Adrenal gland (tissue), 19 donors: ENCODE measurements at regions of chr19 and their contacts with region 1.

Region 1: GRCh38 chr19:3108775-3109174 is 14.6 kb downstream of the GNA11 start:
- DNase-seq: peak; percentile 56 to 81 (median 72)
- H3K4me3 ChIP-seq: no peak overlapping the region
- H3K27ac ChIP-seq: no peak overlapping the region
- H3K4me1 ChIP-seq: peaks cover 6 to 23% of the 10 kb centered on the region in 2 donors
- H3K27me3 ChIP-seq: no peaks in the 10 kb centered on the region
- CTCF ChIP-seq: peak; percentile 68 to 82 (median 76)
- POLR2A ChIP-seq: no peak

Region 2: GRCh38 chr19:2950286-2951124 is 158.3 kb before region 1 on chr19:
- intact Hi-C with region 1: loop called in 1 of 2 experiments (anchors 10 kb)
- DNase-seq: peak; percentile 100
- H3K4me3 ChIP-seq: peak overlapping the region; percentile 52 to 93 (median 81)
- H3K27ac ChIP-seq: peak overlapping the region; percentile 90 to 97 (median 96)
- H3K4me1 ChIP-seq: peaks cover 12 to 13% of the 10 kb centered on the region in 2 donors
- H3K27me3 ChIP-seq: no peaks in the 10 kb centered on the region
- CTCF ChIP-seq: no peak
- POLR2A ChIP-seq: peak; percentile 80 to 91

Region 3: GRCh38 chr19:2962045-2962561 is 146.7 kb before region 1 on chr19:
- intact Hi-C with region 1: loop called (anchors 10 kb)
- DNase-seq: peak in 4 of 7 donors; percentile 57 to 79 (median 76)
- H3K4me3 ChIP-seq: no peak overlapping the region
- H3K27ac ChIP-seq: no peak overlapping the region
- H3K4me1 ChIP-seq: no peaks in the 10 kb centered on the region
- H3K27me3 ChIP-seq: no peaks in the 10 kb centered on the region
- CTCF ChIP-seq: peak; percentile 54 to 98 (median 92)
- POLR2A ChIP-seq: no peak